H1 (cell line): ENCODE measurements at regions of chr9 and their contacts with region 1.

Region 1: GRCh38 chr9:128764361-128764760 is 7.4 kb downstream of the ZER1 start:
- DNase-seq: peak in 1 of 2 experiments; percentile 56
- H3K4me3 ChIP-seq: no peak overlapping the region
- H3K27ac ChIP-seq: peak overlapping the region; percentile 30; the same call in 1 of the 2 replicates
- H3K4me1 ChIP-seq: peaks cover 0 to 3% (median 2%) of the 10 kb centered on the region in 4 experiments; a peak in 2 of 7 replicates
- H3K27me3 ChIP-seq: no peaks in the 10 kb centered on the region
- CTCF ChIP-seq: peak; percentile 49 to 58 (median 53)
- EP300 ChIP-seq: no peak
- POLR2A ChIP-seq: no peak
- RAD21 ChIP-seq: peak; percentile 63 to 69

Region 2: GRCh38 chr9:128656416-128657343 is 107.7 kb before region 1 on chr9 and contains the start of gene DYNC2I2:
- CTCF ChIA-PET with region 1: no interaction called
- POLR2A ChIA-PET with region 1: no interaction called
- DNase-seq: peak; percentile 84 to 97
- H3K4me3 ChIP-seq: peak within 1 kb of the TSS; percentile 66 to 86 (median 68)
- H3K27ac ChIP-seq: peak within 1 kb of the TSS; percentile 100
- H3K4me1 ChIP-seq: no peaks in the 10 kb centered on the region; a peak in 2 of 7 replicates
- H3K27me3 ChIP-seq: no peaks in the 10 kb centered on the region
- CTCF ChIP-seq: no peak
- EP300 ChIP-seq: 0 out of 3 replicates have a peak, but pooled peaks of 1 of the 2 experiments have one; percentile 9
- POLR2A ChIP-seq: peak; percentile 82 to 87
- RAD21 ChIP-seq: peak in 1 of 2 experiments; percentile 17; a peak in 1 of 4 replicates
- total RNA-seq, gene DYNC2I2: 58.0 and 60.4 TPM in 2 replicates

Region 3: DNA sequence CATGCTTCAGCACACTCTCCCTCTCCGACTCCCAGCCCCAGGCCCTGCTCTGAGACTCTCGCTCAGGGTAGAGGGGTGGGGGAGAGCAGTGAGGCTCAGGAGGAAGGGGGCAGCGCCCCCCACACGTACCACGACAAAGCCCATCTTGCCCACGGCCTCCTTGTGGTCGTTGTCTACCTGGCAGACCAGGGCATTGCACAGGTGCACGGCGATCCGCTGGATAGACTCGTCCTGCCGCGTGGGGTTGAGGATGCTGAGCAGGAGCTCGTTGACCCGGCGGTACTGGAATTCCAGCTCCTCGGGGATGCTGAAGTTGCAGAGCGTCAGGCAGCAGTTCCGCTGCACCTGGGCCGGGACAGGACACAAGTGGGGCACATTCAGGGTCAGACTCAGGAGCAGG is 22.0 kb before region 1 on chr9:
- CTCF ChIA-PET with region 1: interaction called, 27 read pairs
- POLR2A ChIA-PET with region 1: interaction called, 5 read pairs
- DNase-seq: no peak
- H3K4me3 ChIP-seq: no peak overlapping the region
- H3K27ac ChIP-seq: no peak overlapping the region
- H3K4me1 ChIP-seq: no peaks in the 10 kb centered on the region
- H3K27me3 ChIP-seq: no peaks in the 10 kb centered on the region
- CTCF ChIP-seq: peak in 2 of 3 experiments; percentile 14 to 34; a peak in 1 of 4 replicates
- EP300 ChIP-seq: no peak
- POLR2A ChIP-seq: no peak
- RAD21 ChIP-seq: no peak

Region 4: DNA sequence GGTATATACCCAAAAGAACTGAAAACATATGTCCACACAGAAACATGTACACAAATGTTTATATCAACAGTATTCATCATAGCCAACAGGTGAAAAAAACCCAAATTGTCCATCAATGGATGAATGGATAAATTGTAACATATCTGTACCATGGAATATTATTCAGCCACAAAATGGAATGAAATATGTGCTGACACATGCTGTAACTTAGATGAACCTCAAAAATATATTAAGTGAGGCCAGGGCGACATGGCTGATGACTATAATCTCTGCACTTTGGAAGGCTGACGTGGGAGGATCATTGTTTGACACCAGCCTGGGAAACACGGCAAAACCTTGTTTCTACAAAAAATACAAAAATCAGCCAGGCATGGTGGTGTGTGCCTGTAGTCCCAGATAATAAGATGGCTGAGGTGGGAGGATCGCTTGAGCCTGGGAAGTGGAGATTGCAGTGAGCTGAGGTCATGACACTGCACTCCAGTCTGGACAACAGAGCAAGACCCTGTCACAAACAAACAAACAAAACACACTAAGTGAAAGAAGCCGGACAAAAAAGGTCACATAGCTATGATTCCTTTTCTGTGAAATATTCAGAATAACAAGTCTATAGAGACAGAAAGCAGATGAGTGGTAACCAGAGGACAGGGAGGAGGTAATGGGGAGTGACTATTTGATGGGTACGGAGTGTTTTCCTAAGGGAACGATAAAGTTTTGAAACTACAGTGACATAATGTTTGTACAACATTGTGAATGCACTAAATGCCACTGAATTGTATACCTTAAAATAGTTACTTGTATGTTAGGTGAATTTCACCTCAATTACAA is 106.0 kb after region 1 on chr9:
- CTCF ChIA-PET with region 1: no interaction called
- POLR2A ChIA-PET with region 1: no interaction called
- DNase-seq: no peak
- H3K4me3 ChIP-seq: no peak overlapping the region
- H3K27ac ChIP-seq: no peak overlapping the region
- H3K4me1 ChIP-seq: no peaks in the 10 kb centered on the region
- H3K27me3 ChIP-seq: no peaks in the 10 kb centered on the region
- CTCF ChIP-seq: no peak
- EP300 ChIP-seq: no peak
- POLR2A ChIP-seq: no peak
- RAD21 ChIP-seq: no peak